Tibial artery (tissue), 4 donors: ENCODE measurements at regions of chr3 and their contacts with region 1.

Region 1: DNA sequence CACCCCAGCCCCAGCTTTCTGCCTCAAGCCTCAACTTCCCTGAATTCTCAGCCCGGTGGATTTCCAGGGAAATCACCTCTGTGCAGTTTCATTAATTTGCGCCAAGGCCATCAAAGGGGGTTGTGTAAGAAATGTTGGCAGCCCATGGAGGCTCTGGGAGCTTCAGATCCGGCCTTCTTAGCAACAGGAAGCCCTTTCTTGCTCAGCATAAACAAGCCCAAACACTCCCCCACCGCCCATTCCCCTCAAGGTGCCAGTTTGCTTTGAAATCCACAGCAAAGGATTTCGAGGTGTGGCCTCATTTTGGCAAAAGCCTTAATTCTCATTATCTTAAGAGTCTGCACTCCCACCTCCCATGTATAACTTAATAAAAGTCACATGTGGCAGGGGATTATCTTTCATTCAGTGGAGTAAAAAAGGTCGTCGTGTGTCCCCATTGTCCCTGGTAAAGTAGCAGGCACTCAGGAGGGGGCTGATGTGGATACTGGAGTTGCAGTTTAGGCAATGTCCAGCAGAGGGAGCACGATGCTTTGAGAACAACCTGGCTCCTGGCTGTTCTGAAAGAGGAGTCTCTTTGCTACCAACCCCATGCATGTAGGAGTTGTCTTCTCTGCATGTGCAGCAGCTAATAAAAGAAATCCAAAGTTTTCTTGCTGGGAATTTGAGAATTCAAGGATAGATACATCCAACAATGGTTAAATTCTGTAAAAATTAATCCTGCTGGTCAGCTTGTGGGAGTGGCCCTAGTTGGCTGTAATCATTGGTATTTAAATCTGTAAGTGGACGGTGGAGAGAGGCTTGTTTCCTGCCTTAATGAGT is 39.5 kb downstream of the EBLN2 start:
- DNase-seq: peak; percentile 87 to 89
- H3K4me3 ChIP-seq: no peak overlapping the region
- H3K27ac ChIP-seq: no peak overlapping the region
- H3K4me1 ChIP-seq: peaks cover 0 to 3% (median 0%) of the 10 kb centered on the region in 4 donors
- H3K27me3 ChIP-seq: no peaks in the 10 kb centered on the region
- CTCF ChIP-seq: peak; percentile 93 to 94

Region 2: GRCh38 chr3:73502609-73503583 is 401.9 kb after region 1 on chr3:
- intact Hi-C with region 1: loop called (anchors 5 kb)
- DNase-seq: peak in 1 of 2 donors; percentile 80
- H3K4me3 ChIP-seq: no peak overlapping the region
- H3K27ac ChIP-seq: peak overlapping the region; percentile 19 to 54
- H3K4me1 ChIP-seq: peaks cover 0 to 74% (median 19%) of the 10 kb centered on the region in 4 donors
- H3K27me3 ChIP-seq: no peaks in the 10 kb centered on the region
- CTCF ChIP-seq: peak; percentile 79 to 86

Region 3: GRCh38 chr3:73848173-73848906 is 747.4 kb after region 1 on chr3:
- intact Hi-C with region 1: loop called (anchors 5 kb)
- DNase-seq: no peak
- H3K4me3 ChIP-seq: no peak overlapping the region
- H3K27ac ChIP-seq: no peak overlapping the region
- H3K4me1 ChIP-seq: peaks cover 0 to 3% (median 0%) of the 10 kb centered on the region in 4 donors
- H3K27me3 ChIP-seq: no peaks in the 10 kb centered on the region
- CTCF ChIP-seq: peak; percentile 69 to 74